Heart left ventricle (tissue), 16 donors: ENCODE measurements at regions of chr11 and their contacts with region 1.

Region 1: DNA sequence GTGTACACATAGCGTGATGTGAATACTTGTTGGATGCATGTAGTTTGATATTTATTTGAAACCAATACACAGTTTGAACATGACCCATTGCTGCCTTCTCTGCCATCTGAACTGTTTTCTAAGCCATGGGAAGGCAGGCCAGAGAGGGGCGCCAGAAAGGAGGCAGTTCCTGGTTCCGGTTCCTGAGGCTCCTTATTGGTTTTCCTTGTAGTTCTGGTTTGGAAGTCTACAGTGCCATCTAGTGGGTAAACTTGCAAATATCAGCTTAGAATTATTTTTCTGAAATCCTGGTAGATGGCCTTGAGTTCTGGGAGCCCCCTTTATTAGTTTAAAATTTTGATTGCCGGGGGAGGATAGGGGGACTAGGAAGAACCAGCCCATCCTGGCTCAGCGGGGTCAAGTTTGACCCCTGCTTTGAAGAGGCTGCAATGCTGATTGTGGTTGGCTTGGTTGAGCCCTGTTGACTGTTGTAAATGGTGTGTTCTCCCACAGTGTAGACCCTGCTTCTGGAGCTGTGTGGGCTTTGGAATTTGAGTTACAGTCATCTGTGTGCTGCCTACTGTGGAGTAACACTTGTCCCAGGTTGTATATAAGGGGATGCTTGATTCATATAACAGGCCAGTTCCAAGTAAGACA is 48.4 kb downstream of the GRAMD1B start:
- DNase-seq: peak in 4 of 5 donors; percentile 41 to 52 (median 48)
- ATAC-seq: peak in 3 of 4 donors; percentile 60 to 69 (median 69)
- H3K4me3 ChIP-seq: peak overlapping the region in 1 of 12 donors; percentile 13
- H3K27ac ChIP-seq: no peak overlapping the region
- H3K4me1 ChIP-seq: peaks cover 0 to 42% (median 19%) of the 10 kb centered on the region in 12 donors
- H3K27me3 ChIP-seq: no peaks in the 10 kb centered on the region
- CTCF ChIP-seq: peak; percentile 55 to 81 (median 72)
- POLR2A ChIP-seq: no peak

Region 2: DNA sequence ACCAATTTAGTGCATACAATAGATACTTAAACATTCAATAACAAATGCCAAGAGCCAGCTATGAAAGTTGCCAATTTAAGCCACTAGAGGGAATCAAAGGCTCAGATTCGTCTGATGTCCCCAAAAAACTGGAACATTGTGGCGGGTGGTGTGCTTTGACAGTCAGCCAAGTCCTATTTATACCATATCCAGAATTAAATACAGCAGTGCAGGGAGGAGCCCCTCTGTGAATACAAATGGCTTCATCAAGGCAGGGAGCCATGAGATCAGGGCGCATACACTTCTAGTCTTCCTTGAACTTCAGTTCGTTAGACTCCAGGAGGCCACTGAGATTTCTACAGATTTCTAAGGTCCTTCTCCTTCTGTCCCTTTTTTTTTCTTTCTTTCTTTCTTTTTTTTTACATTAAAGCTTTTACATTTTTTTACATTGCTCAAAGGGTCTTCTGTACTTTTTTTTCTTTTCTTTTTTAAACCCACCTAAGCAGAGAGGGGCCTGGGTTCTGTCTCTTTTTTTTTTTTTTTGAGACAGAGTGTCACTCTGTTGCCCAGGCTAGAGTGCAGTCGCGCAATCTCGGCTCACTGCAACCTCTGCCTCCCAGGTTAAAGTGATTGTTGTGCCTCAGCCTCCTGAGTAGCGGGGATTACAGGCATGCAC is 375.0 kb before region 1 on chr11:
- intact Hi-C with region 1: loop called in 4 of 10 experiments (anchors 10 kb)
- DNase-seq: peak in 4 of 5 donors; percentile 54 to 75 (median 72)
- ATAC-seq: peak; percentile 83 to 94 (median 88)
- H3K4me3 ChIP-seq: peak overlapping the region in 1 of 12 donors; percentile 5
- H3K27ac ChIP-seq: peak overlapping the region; percentile 18 to 72 (median 58)
- H3K4me1 ChIP-seq: peaks cover 0 to 43% (median 21%) of the 10 kb centered on the region in 12 donors
- H3K27me3 ChIP-seq: no peaks in the 10 kb centered on the region
- CTCF ChIP-seq: peak; percentile 51 to 77 (median 66)
- POLR2A ChIP-seq: no peak

Region 3: DNA sequence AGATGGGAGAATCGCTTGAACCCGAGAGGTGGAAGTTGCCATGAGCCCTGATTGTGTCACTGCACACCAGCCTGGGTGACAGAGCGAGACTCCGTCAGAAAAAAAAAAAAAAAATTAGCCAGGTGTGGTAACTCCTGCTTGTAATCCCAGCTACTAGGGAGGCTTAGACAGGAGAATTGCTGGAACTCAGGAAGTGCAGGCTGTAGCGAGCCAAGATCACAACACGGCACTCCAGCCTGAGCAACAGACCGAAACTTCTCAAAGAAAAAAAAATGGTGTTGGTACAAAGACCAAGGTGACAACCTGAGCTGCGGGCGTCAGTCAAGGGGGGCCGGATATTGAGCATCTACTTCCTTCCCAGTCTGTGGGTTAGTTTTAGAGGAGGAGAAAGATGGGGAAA is 368.1 kb before region 1 on chr11:
- intact Hi-C with region 1: loop called in 9 of 10 experiments (anchors 5 to 10 kb)
- DNase-seq: no peak
- ATAC-seq: no peak
- H3K4me3 ChIP-seq: no peak overlapping the region
- H3K27ac ChIP-seq: peak overlapping the region in 1 of 12 donors; percentile 17
- H3K4me1 ChIP-seq: peaks cover 0 to 6% (median 0%) of the 10 kb centered on the region in 12 donors
- H3K27me3 ChIP-seq: no peaks in the 10 kb centered on the region
- CTCF ChIP-seq: no peak
- POLR2A ChIP-seq: no peak

Region 4: DNA sequence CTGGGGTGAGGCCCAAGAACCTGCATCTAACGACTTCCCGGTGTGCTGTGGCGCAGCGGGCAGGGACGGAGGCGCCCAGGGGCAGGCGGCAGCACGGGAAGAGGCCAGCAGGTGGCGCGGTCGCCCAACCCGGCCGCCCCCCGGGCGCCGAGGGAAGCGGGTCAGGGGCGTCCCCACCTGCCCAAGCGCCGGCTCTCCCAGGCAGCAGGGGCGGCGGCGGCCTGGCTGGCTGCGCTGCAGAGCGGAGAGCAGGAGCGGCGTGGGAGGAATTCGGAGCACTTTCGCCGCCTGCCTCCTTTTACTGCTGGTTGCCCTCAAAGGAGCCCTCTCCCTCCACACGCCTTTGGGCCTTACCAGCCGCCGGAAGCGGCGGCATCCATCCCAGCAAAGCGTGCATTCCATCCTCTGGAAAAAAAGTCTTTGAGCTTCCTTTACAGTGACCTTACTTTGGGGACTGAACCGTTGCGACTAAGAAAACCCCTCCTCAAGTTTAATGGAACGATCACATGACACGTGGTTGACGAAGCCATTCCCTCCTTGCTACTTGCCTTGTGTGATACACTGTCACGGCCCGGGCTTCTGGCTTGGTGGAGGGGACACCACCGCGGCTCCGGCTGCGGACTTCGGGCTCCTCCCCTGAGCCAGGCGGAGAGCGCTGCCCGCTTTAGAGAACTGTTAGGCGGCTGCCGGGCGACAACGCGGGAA is 176.6 kb before region 1 on chr11:
- intact Hi-C with region 1: loop called (anchors 1 to 5 kb)
- DNase-seq: peak; percentile 56 to 86 (median 68)
- ATAC-seq: peak; percentile 29 to 92 (median 81)
- H3K4me3 ChIP-seq: peak overlapping the region; percentile 24 to 60 (median 45)
- H3K27ac ChIP-seq: peak overlapping the region in 5 of 12 donors; percentile 15 to 50 (median 33)
- H3K4me1 ChIP-seq: peaks cover 0 to 24% (median 13%) of the 10 kb centered on the region in 12 donors
- H3K27me3 ChIP-seq: peaks cover 0 to 18% (median 0%) of the 10 kb centered on the region in 9 donors
- CTCF ChIP-seq: peak; percentile 75 to 96 (median 91)
- POLR2A ChIP-seq: no peak

Region 5: GRCh38 chr11:123357961-123358841 is 120.3 kb before region 1 on chr11:
- intact Hi-C with region 1: loop called in 4 of 10 experiments (anchors 5 kb)
- DNase-seq: peak; percentile 21 to 65 (median 44)
- ATAC-seq: peak; percentile 39 to 70 (median 63)
- H3K4me3 ChIP-seq: peak overlapping the region; percentile 34 to 69 (median 58)
- H3K27ac ChIP-seq: peak overlapping the region in 11 of 12 donors; percentile 52 to 83 (median 77)
- H3K4me1 ChIP-seq: peaks cover 0 to 26% (median 8%) of the 10 kb centered on the region in 12 donors
- H3K27me3 ChIP-seq: peaks cover 0 to 38% (median 5%) of the 10 kb centered on the region in 9 donors
- CTCF ChIP-seq: peak in 10 of 12 donors; percentile 8 to 57 (median 34)
- POLR2A ChIP-seq: no peak

Region 6: GRCh38 chr11:123407130-123407995 is 71.1 kb before region 1 on chr11:
- intact Hi-C with region 1: loop called (anchors 1 to 5 kb)
- DNase-seq: peak in 4 of 5 donors; percentile 52 to 73 (median 67)
- ATAC-seq: peak; percentile 34 to 49 (median 43)
- H3K4me3 ChIP-seq: peak overlapping the region in 4 of 12 donors; percentile 23 to 41 (median 34)
- H3K27ac ChIP-seq: peak overlapping the region in 7 of 12 donors; percentile 15 to 89 (median 47)
- H3K4me1 ChIP-seq: peaks cover 0 to 54% (median 14%) of the 10 kb centered on the region in 12 donors
- H3K27me3 ChIP-seq: no peaks in the 10 kb centered on the region
- CTCF ChIP-seq: peak; percentile 41 to 73 (median 60)
- POLR2A ChIP-seq: no peak

Region 7: DNA sequence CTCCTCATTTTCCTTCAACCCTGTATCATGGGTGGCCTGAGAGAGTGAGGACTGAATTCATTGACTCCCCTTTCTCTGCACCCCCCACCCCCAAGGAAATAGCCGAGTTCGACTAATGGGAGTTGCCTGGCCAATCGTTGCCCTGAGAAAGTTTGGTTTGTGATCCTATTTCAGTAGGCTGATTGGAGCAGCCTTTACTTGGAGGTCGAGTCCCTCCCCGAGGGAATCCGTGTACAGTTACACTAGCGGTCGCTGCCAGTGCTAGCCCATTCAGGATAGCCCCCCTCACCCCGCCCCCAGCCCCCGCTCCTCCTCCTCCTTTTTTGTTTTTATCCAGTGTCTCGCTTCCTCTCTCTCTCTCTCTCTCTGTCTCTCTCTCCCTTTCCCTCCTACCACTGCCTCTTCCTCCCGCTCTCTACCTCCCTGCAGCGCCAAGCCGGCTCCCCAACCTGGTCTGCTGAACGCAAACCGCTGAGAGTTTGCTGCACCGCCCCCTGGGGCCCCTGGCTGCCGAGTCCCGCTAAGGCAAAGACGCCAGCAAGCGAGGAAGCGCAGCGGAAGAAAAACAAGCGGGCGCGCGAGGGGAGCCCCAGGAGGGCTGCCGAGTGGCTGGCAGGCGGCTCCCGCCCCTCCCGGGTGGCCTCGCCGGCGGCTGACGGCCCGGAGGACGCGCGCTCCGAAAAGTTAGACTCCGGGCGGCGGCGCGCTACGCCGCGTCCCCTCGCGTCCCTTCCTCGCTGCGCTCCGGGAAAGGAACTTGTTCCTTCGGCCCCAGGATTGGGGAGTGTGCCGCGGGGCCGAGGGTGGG is 48.4 kb before region 1 on chr11 and contains the start of gene GRAMD1B:
- intact Hi-C with region 1: loop called in 1 of 10 experiments (anchors 5 kb)
- DNase-seq: peak; percentile 53 to 85 (median 61)
- ATAC-seq: peak; percentile 33 to 62 (median 58)
- H3K4me3 ChIP-seq: peak within 1 kb of the TSS; percentile 25 to 78 (median 64)
- H3K27ac ChIP-seq: peak within 1 kb of the TSS in 11 of 12 donors; percentile 22 to 88 (median 73)
- H3K4me1 ChIP-seq: peaks cover 0 to 38% (median 9%) of the 10 kb centered on the region in 12 donors
- H3K27me3 ChIP-seq: peaks cover 0 to 10% (median 3%) of the 10 kb centered on the region in 9 donors
- CTCF ChIP-seq: peak in 2 of 12 donors; percentile 8 to 11
- POLR2A ChIP-seq: no peak
- total RNA-seq, gene GRAMD1B: 12.7 to 42.5 (median 23.0) TPM